Colonic mucosa (tissue), 4 donors: ENCODE measurements at regions of chr1 and their contacts with region 1.

Region 1: GRCh38 chr1:78045926-78046778 is at the start of gene GIPC2:
- DNase-seq: peak; percentile 75
- H3K4me3 ChIP-seq: peak within 1 kb of the TSS; percentile 77
- H3K27ac ChIP-seq: peak within 1 kb of the TSS; percentile 84
- H3K4me1 ChIP-seq: no peaks in the 10 kb centered on the region
- H3K27me3 ChIP-seq: no peaks in the 10 kb centered on the region
- CTCF ChIP-seq: no peak
- total RNA-seq, gene GIPC2: 26.7 to 35.4 TPM

Region 2: GRCh38 chr1:77991638-77992037 is 54.5 kb before region 1 on chr1:
- intact Hi-C with region 1: loop called (anchors 10 kb)
- DNase-seq: no peak
- H3K4me3 ChIP-seq: no peak overlapping the region
- H3K27ac ChIP-seq: no peak overlapping the region
- H3K4me1 ChIP-seq: no peaks in the 10 kb centered on the region
- H3K27me3 ChIP-seq: no peaks in the 10 kb centered on the region
- CTCF ChIP-seq: no peak

Region 3: GRCh38 chr1:78184460-78185072 is 138.4 kb after region 1 on chr1:
- intact Hi-C with region 1: no loop called
- DNase-seq: no peak
- H3K4me3 ChIP-seq: no peak overlapping the region
- H3K27ac ChIP-seq: no peak overlapping the region
- H3K4me1 ChIP-seq: no peaks in the 10 kb centered on the region
- H3K27me3 ChIP-seq: no peaks in the 10 kb centered on the region
- CTCF ChIP-seq: no peak